ENCODE measurements at regions of chr12 and their contacts with region 1.

Region 1: GRCh38 chr12:43758728-43759563 is at the starts of genes IRAK4 and PUS7L:
- DNase-seq: peak; percentile 89 to 92
- H3K4me3 ChIP-seq: peak within 1 kb of the TSS; percentile 83
- H3K27ac ChIP-seq: peak within 1 kb of the TSS; percentile 71
- H3K4me1 ChIP-seq: peaks cover 39% of the 10 kb centered on the region
- H3K27me3 ChIP-seq: no peaks in the 10 kb centered on the region
- CTCF ChIP-seq: peak; percentile 43; the same call in 1 of the 2 replicates
- total RNA-seq, gene IRAK4: 10.0 and 10.1 TPM in 2 replicates
- total RNA-seq, gene PUS7L: 14.7 and 15.7 TPM in 2 replicates

Region 2: GRCh38 chr12:43696154-43696553 is 62.8 kb before region 1 on chr12:
- CTCF ChIA-PET with region 1: no interaction called
- POLR2A ChIA-PET with region 1: no interaction called
- intact Hi-C with region 1: no loop called
- DNase-seq: no peak
- H3K4me3 ChIP-seq: no peak overlapping the region
- H3K27ac ChIP-seq: no peak overlapping the region
- H3K4me1 ChIP-seq: no peaks in the 10 kb centered on the region
- H3K27me3 ChIP-seq: no peaks in the 10 kb centered on the region
- CTCF ChIP-seq: no peak

Region 3: DNA sequence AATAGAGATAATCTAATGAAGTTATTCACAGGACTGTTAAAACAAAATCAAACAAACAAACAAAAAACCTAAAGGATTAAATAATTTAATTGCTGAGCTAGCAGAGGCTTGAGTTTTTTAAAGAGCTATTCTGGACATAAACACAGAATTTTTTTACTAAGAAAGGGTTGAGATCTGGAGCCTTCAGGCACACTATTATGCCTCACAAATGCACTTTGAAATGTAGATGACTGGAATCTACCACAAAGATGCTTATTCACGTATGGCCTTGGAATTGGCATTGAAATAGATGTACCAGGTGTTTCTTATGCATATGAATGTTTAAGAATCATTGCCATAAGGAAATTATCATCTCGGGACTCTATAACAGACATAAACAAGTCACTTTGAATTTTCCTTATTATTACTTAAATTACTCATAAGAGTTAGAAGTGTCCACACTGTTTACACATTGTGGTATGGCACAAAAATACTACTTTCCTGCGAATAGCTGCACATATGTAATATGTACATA is 22.0 kb before region 1 on chr12:
- CTCF ChIA-PET with region 1: interaction called, 4 read pairs
- POLR2A ChIA-PET with region 1: interaction called, 25 read pairs
- intact Hi-C with region 1: no loop called
- DNase-seq: no peak
- H3K4me3 ChIP-seq: no peak overlapping the region
- H3K27ac ChIP-seq: no peak overlapping the region
- H3K4me1 ChIP-seq: no peaks in the 10 kb centered on the region
- H3K27me3 ChIP-seq: no peaks in the 10 kb centered on the region
- CTCF ChIP-seq: no peak

Region 4: GRCh38 chr12:43805860-43806736 is 47.2 kb after region 1 on chr12 and contains the start of gene TWF1:
- CTCF ChIA-PET with region 1: interaction called, 8 read pairs
- POLR2A ChIA-PET with region 1: interaction called, 19 read pairs
- intact Hi-C with region 1: loop called (anchors 2 kb)
- DNase-seq: peak; percentile 55 to 82
- H3K4me3 ChIP-seq: peak within 1 kb of the TSS; percentile 94
- H3K27ac ChIP-seq: peak within 1 kb of the TSS; percentile 76
- H3K4me1 ChIP-seq: peaks cover 28% of the 10 kb centered on the region
- H3K27me3 ChIP-seq: no peaks in the 10 kb centered on the region
- CTCF ChIP-seq: peak; percentile 46; the same call in 1 of the 2 replicates
- total RNA-seq, gene TWF1: 54.5 and 85.9 TPM in 2 replicates

Region 5: DNA sequence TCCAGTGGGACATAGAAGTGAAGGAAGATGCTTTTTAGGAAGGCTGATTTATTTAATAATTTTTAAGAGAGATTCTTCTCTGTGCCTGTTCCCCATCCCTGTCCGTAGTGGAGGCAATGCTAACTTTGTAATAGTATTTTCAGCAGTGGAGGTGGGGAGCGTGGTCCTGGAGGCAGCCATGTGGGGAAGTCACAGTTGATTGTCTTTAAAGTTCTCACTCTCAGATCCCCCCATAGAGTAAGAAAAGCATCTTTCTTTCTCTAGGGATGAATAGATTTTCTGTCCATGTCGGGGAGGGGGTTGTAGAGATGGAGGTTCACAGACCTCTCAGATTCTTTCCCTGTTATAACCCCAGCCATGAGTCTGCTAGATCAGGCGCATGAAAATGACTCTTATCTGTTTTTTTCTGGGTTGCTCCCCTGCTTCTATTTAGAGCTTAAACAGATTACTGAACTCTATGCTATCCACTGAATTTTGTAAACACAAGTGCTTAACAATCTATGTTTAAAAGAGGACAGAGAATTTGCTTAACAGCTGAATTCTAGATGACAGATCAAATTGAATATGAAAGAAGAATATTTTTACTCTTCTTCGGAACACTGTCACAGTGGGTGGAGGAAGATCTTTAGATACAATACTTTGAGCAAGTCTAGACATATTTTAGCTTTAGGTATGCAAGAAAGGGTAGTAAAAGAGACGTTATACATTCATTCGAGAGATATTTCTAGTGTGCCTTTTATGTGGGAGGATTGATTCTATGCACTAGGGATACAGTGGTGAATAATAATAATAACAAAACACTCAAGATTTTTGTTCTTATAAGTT is 102.3 kb after region 1 on chr12:
- CTCF ChIA-PET with region 1: no interaction called
- POLR2A ChIA-PET with region 1: no interaction called
- intact Hi-C with region 1: no loop called
- DNase-seq: no peak
- H3K4me3 ChIP-seq: no peak overlapping the region
- H3K27ac ChIP-seq: no peak overlapping the region
- H3K4me1 ChIP-seq: no peaks in the 10 kb centered on the region
- H3K27me3 ChIP-seq: no peaks in the 10 kb centered on the region
- CTCF ChIP-seq: no peak